ENCODE measurements at regions of chr17 and their contacts with region 1.

Region 1: DNA sequence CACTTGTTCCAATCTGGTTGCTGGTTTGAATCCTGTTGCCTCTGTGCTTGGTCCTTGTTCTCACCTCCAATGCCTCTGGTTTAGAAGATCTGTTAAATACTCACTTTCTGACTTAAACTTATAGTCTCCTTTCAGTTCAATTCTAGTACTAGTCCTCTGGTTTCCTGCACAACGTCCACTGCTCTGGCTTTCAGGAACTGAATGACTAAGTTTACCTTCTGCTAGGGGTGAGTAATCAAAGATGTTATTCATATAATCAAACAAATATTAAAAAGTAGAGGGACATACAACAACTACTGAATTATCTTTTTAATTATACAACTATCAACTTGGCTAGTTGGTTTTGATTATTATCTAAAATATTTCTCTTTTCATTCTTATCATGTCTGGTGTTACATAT is 496.4 kb upstream of the TOM1L1 start:
- DNase-seq: no peak
- ATAC-seq: no peak
- H3K4me3 ChIP-seq: no peak overlapping the region
- H3K27ac ChIP-seq: no peak overlapping the region
- H3K4me1 ChIP-seq: no peaks in the 10 kb centered on the region
- H3K27me3 ChIP-seq: no peaks in the 10 kb centered on the region
- CTCF ChIP-seq: no peak
- POLR2A ChIP-seq: no peak

Region 2: DNA sequence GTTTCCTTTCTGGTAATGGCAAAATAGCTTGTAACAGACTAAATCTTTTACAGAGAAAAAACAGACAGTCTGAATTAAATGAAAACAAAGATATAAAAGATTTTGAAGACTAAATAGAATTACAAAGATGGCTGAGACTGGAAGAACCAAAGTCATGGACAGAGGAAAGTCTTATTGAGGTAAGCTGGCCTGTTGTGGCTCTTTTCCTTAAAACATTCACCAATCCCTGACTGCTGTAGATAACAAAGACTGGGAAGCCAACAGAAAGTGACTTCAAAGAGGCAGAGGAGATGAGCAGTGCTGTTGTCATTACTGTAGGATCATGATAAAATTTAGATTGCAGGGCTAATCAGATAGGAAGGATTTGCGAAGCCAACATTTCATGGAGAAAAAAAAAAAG is 64.5 kb before region 1 on chr17:
- intact Hi-C with region 1: loop called in 1 of 10 experiments (anchors 10 kb)
- DNase-seq: no peak
- ATAC-seq: no peak
- H3K4me3 ChIP-seq: no peak overlapping the region
- H3K27ac ChIP-seq: no peak overlapping the region
- H3K4me1 ChIP-seq: no peaks in the 10 kb centered on the region
- H3K27me3 ChIP-seq: no peaks in the 10 kb centered on the region
- CTCF ChIP-seq: no peak
- POLR2A ChIP-seq: no peak